ENCODE measurements at regions of chr11 and their contacts with region 1.

Region 1: DNA sequence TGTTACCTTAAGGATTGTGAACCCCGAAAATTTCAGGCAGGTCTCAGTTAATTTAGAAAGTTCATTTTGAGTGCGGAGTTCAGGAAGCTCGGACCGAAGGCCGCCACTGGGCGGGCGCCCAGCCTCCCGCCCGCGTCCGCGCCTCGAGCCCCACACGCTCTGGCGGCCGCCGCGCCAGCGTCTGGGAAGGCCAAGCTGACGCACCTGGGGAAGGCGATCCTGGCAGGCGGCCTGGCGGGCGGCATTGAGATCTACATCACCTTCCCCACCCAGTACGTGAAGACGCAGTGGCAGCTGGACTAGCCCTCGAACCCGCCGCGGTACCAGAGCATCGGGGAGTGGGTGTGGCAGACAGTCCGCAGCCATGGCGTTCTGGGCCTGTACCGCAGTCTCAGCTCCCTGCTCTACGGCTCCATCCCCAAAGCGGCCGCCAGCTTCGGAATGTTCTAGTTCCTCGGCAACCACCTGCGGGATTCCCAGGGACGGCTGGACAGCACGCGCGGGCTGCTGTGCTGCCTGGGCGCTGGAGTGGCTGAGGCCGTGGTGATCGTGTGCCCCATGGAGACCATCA is 79.5 kb downstream of the CCDC83 start:
- DNase-seq: no peak
- H3K4me3 ChIP-seq: no peak overlapping the region
- H3K27ac ChIP-seq: no peak overlapping the region
- H3K4me1 ChIP-seq: no peaks in the 10 kb centered on the region
- H3K27me3 ChIP-seq: no peaks in the 10 kb centered on the region
- CTCF ChIP-seq: no peak

Region 2: DNA sequence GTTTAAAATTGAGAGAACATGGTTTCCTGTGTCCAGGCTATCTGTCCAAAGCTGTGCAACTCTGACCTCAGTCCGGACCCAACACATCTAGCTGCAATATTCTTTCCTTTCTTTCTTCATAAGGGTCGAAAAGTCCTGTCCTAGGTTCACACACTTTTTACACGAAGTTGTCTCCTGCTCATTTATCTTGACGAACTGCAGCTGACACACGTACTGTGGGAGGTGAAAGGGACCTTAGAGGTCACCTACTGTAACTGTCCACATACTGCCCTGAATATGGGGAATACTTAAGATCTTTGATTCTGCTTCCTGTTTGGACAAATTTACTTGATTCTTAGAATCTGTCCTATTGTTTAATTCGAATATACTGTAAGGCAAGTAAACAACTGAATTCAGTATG is 26.4 kb after region 1 on chr11:
- CTCF ChIA-PET with region 1: no interaction called
- POLR2A ChIA-PET with region 1: interaction called, 10 read pairs
- intact Hi-C with region 1: no loop called
- DNase-seq: no peak
- H3K4me3 ChIP-seq: no peak overlapping the region
- H3K27ac ChIP-seq: no peak overlapping the region
- H3K4me1 ChIP-seq: peaks cover 8% of the 10 kb centered on the region
- H3K27me3 ChIP-seq: no peaks in the 10 kb centered on the region
- CTCF ChIP-seq: no peak

Measured in A673 (cell line).